AG04449 (cell line): ENCODE measurements at regions of chr6 and their contacts with region 1.

Region 1: GRCh38 chr6:142155895-142156757 is 9.1 kb downstream of the VTA1 start:
- DNase-seq: no peak
- H3K4me3 ChIP-seq: no peak overlapping the region
- CTCF ChIP-seq: no peak

Region 2: DNA sequence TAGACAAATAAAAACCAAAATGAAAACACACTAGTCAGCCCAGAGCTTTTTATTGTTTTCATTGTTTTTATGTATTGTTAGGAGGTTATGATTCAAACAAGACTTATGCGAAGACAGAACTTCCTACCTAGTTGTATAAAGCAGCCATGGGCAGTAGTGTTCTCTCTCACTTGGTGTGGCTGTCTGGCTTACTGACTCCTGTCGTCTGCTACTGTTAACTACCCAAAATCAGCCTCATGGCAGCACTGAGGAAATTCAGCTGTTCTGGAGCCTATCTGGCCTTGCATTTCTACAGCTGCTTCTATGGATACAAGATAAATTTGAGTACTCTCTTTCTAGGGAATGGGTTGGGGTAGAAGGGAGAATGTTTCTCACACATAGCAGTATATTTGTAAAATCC is 11.4 kb after region 1 on chr6:
- CTCF ChIA-PET with region 1: interaction called, 65 read pairs
- POLR2A ChIA-PET with region 1: no interaction called
- DNase-seq: no peak
- H3K4me3 ChIP-seq: no peak overlapping the region
- CTCF ChIP-seq: no peak

Region 3: GRCh38 chr6:142177201-142177600 is 21.1 kb after region 1 on chr6:
- CTCF ChIA-PET with region 1: interaction called, 10 read pairs
- POLR2A ChIA-PET with region 1: no interaction called
- DNase-seq: no peak
- H3K4me3 ChIP-seq: no peak overlapping the region
- CTCF ChIP-seq: no peak

Region 4: GRCh38 chr6:142187209-142187608 is 31.1 kb after region 1 on chr6:
- CTCF ChIA-PET with region 1: interaction called, 16 read pairs
- POLR2A ChIA-PET with region 1: no interaction called
- DNase-seq: no peak
- H3K4me3 ChIP-seq: no peak overlapping the region
- CTCF ChIP-seq: no peak

Region 5: GRCh38 chr6:142195862-142196541 is 39.9 kb after region 1 on chr6:
- CTCF ChIA-PET with region 1: interaction called, 12 read pairs
- POLR2A ChIA-PET with region 1: no interaction called
- DNase-seq: no peak
- H3K4me3 ChIP-seq: no peak overlapping the region
- CTCF ChIP-seq: no peak

Region 6: GRCh38 chr6:142387997-142388815 is 232.1 kb after region 1 on chr6:
- CTCF ChIA-PET with region 1: interaction called, 116 read pairs
- POLR2A ChIA-PET with region 1: no interaction called
- DNase-seq: no peak
- H3K4me3 ChIP-seq: no peak overlapping the region
- CTCF ChIP-seq: peak; percentile 59

Region 7: DNA sequence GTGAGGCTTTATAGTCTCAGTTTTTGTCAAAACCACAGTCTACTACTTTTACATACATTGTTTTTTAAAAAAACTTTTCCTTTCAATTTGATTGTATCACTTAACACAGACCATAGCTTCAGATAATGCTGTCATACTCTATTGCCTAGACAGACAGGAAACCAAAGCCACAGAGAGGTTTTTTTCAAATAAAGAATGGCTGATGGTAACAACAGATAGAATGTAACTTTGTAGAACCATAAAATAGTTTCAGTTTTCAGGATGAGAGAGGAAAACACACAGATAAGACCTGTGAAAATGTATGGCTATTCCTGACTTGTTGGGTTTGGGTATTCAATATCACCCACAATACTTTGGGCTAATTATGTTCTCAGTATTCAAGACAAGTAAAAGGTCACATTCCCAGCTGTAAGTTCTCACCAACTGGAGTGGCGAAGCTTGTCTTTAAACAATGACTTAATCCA is 239.7 kb after region 1 on chr6:
- CTCF ChIA-PET with region 1: interaction called, 10 read pairs
- POLR2A ChIA-PET with region 1: no interaction called
- DNase-seq: no peak
- H3K4me3 ChIP-seq: no peak overlapping the region
- CTCF ChIP-seq: no peak